Activated naive CD4-positive, alpha-beta T cell treated with anti-CD3 and anti-CD28 coated beads for 36 hours (primary cell): ENCODE measurements at regions of chr10 and their contacts with region 1.

Region 1: DNA sequence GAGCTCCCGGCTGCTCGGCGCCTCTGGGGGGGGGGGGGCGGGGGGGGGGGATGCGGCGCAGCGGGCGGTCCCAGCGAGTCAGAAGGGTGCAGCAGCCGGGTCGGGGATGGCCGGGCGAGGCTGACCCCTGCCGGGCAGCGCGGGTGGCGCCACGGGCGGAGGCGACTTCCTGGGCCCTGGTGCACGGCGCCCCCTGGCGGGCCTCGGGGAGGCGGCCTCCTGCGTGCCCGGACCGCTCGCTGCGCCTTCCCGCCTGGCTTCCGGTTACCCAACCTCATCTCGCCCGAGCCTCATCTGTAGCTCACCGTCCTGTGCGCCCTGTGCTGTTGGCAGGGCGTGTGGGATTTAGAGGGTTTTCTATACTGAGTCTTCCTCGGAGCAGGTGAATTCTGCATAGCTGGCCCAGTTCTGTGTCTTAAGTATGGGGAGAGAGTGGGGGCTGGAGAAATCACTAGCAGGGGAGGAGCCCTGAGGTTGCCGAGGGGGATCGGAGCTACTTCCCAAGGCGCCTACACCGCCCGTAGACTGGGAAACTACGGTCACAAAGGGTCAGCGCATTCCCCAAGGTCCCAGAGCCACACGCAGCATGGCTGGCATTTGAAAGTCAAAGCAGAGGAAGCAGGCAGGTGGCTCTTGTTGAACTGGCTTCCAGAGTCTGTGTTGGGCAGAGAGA is 28.3 kb upstream of the WDFY4 start:
- DNase-seq: peak; percentile 91
- H3K4me3 Mint-ChIP-seq: peak overlapping the region; percentile 76
- H3K27ac Mint-ChIP-seq: no peak overlapping the region
- H3K4me1 Mint-ChIP-seq: peaks cover 4% of the 10 kb centered on the region
- H3K27me3 Mint-ChIP-seq: peaks cover 23% of the 10 kb centered on the region

Region 2: DNA sequence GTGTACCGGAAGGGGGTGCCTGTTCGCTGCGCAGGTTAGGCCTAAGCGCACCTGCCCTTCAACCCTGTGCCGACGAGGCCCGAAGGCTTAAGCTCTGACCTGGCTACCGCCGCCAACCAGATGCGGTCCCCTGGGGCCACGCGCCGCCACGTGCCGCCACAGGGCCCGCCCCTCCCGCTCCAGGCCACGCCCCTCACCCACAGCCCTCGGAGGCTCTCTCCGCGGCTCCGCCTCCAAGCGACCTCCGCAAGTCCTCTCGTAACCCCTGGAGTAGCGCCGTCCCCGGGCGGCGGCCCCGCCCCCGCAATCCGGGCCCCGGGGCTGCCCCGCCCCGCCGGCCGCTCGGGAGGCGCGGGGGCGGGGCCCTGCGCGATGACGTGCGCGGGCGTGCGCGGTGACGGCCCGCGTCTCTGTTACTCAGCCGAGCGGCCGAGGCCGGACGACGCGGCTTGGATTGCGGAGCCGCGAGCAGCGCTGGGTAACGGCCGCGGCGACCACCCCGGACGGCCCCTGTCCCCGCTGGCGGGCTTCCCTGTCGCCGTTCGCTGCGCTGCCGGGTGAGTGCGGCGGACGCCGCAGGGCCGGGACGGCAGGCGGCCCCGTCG is 350.0 kb before region 1 on chr10 and contains the start of gene MAPK8:
- CTCF ChIA-PET with region 1: interaction called, 4 read pairs
- intact Hi-C with region 1: loop called (anchors 1 kb)
- DNase-seq: peak; percentile 90
- H3K4me3 Mint-ChIP-seq: peak within 1 kb of the TSS; percentile 80
- H3K27ac Mint-ChIP-seq: peak within 1 kb of the TSS; percentile 58
- H3K4me1 Mint-ChIP-seq: peaks cover 30% of the 10 kb centered on the region
- H3K27me3 Mint-ChIP-seq: no peaks in the 10 kb centered on the region
- total RNA-seq, gene MAPK8: 29.7 to 36.2 TPM

Region 3: DNA sequence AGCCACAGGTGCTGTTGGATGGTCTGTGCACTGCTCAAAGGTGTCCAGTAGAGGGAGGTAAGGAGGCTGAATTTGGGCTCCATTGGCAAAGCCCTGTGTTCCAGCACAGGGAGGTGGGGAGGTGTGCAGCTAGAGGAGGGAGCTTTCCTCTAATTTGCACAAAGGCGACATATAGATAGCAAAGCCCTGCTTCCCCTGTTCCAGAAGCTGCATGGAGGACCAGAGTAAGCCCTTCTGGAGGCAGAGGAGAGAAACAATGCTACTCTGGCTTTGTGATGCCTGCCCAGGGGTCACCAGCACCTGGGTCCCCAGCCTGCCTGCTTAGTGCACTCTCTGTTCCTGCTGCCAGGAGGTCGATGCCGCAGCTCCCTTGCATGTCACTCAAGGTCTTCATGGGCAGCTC is 48.1 kb before region 1 on chr10:
- CTCF ChIA-PET with region 1: interaction called, 50 read pairs
- intact Hi-C with region 1: loop called (anchors 1 kb)
- DNase-seq: peak; percentile 45
- H3K4me3 Mint-ChIP-seq: no peak overlapping the region
- H3K27ac Mint-ChIP-seq: no peak overlapping the region
- H3K4me1 Mint-ChIP-seq: peaks cover 3% of the 10 kb centered on the region
- H3K27me3 Mint-ChIP-seq: peaks cover 43% of the 10 kb centered on the region

Region 4: GRCh38 chr10:48638739-48639527 is 17.4 kb before region 1 on chr10:
- CTCF ChIA-PET with region 1: interaction called, 12 read pairs
- intact Hi-C with region 1: no loop called
- DNase-seq: no peak
- H3K4me3 Mint-ChIP-seq: no peak overlapping the region
- H3K27ac Mint-ChIP-seq: no peak overlapping the region
- H3K4me1 Mint-ChIP-seq: peaks cover 8% of the 10 kb centered on the region
- H3K27me3 Mint-ChIP-seq: peaks cover 39% of the 10 kb centered on the region

Region 5: DNA sequence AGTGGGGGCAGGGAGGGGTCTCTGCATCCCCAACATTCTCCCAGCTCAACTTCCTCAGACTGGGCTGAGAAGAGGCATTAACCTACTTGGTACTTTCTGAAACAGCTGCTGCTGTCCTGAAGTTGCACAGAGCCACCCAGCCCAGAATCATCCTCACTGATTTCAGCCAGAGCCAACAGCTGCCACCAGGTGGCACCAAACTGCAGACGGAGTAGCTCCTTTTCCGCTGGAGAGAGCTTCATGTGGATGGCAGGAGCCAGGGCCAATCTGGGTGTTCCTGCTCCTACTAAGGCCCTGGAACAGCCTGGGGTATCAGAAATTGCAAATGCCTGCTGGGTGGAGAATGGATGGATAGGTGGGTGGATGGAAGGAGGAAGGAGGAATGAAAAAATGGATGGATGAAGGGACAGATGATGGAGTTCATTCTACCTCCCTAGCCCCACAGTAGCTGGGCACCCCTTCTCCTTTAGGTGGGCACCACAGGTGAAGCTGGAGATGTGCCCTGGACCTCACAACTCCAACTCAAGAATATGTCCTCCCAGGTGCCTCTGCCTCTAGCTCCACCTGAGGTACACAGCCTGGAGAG is 751.3 kb after region 1 on chr10:
- CTCF ChIA-PET with region 1: interaction called, 8 read pairs
- intact Hi-C with region 1: loop called (anchors 2 kb)
- DNase-seq: peak; percentile 82
- H3K4me3 Mint-ChIP-seq: no peak overlapping the region
- H3K27ac Mint-ChIP-seq: no peak overlapping the region
- H3K4me1 Mint-ChIP-seq: no peaks in the 10 kb centered on the region
- H3K27me3 Mint-ChIP-seq: peaks cover 40% of the 10 kb centered on the region